Adrenal gland (tissue), 19 donors: ENCODE measurements at regions of chr20 and their contacts with region 1.

Region 1: GRCh38 chr20:35463455-35464300 is 8.3 kb downstream of the CEP250 start:
- DNase-seq: peak; percentile 58 to 85 (median 67)
- H3K4me3 ChIP-seq: no peak overlapping the region
- H3K27ac ChIP-seq: no peak overlapping the region
- H3K4me1 ChIP-seq: peaks cover 0 to 5% of the 10 kb centered on the region in 2 donors
- H3K27me3 ChIP-seq: no peaks in the 10 kb centered on the region
- CTCF ChIP-seq: peak; percentile 64 to 81 (median 77)
- POLR2A ChIP-seq: no peak

Region 2: GRCh38 chr20:35344354-35344837 is 119.3 kb before region 1 on chr20:
- intact Hi-C with region 1: no loop called
- DNase-seq: peak; percentile 34 to 80 (median 76)
- H3K4me3 ChIP-seq: no peak overlapping the region
- H3K27ac ChIP-seq: peak overlapping the region in 3 of 5 donors; percentile 0 to 72 (median 49)
- H3K4me1 ChIP-seq: peaks cover 0 to 10% of the 10 kb centered on the region in 2 donors
- H3K27me3 ChIP-seq: no peaks in the 10 kb centered on the region
- CTCF ChIP-seq: no peak
- POLR2A ChIP-seq: no peak

Region 3: GRCh38 chr20:35664544-35665221 is 201.0 kb after region 1 on chr20 and contains the starts of genes CPNE1 and RBM12:
- intact Hi-C with region 1: loop called in 1 of 2 experiments (anchors 10 kb)
- DNase-seq: peak; percentile 93 to 96 (median 94)
- H3K4me3 ChIP-seq: peak within 1 kb of the TSS; percentile 18 to 85 (median 70)
- H3K27ac ChIP-seq: peak within 1 kb of the TSS; percentile 92 to 99 (median 97)
- H3K4me1 ChIP-seq: peaks cover 12 to 36% of the 10 kb centered on the region in 2 donors
- H3K27me3 ChIP-seq: no peaks in the 10 kb centered on the region
- CTCF ChIP-seq: peak in 2 of 6 experiments; percentile 4 to 24
- POLR2A ChIP-seq: peak; percentile 87 to 90
- total RNA-seq, gene CPNE1: 66.8 to 233 (median 156) TPM
- total RNA-seq, gene RBM12: 18.9 to 98.6 (median 57.7) TPM

Region 4: GRCh38 chr20:35699127-35699975 is 235.7 kb after region 1 on chr20 and contains the starts of genes NFS1 and ROMO1:
- intact Hi-C with region 1: loop called in 1 of 2 experiments (anchors 10 kb)
- DNase-seq: peak; percentile 81 to 90 (median 85)
- H3K4me3 ChIP-seq: peak within 1 kb of the TSS; percentile 83 to 90 (median 86)
- H3K27ac ChIP-seq: peak within 1 kb of the TSS; percentile 63 to 93 (median 92)
- H3K4me1 ChIP-seq: peaks cover 10 to 47% of the 10 kb centered on the region in 2 donors
- H3K27me3 ChIP-seq: no peaks in the 10 kb centered on the region
- CTCF ChIP-seq: peak in 3 of 6 experiments; percentile 18 to 36 (median 29)
- POLR2A ChIP-seq: peak; percentile 57 to 62
- total RNA-seq, gene NFS1: 40.1 to 129 (median 114) TPM
- total RNA-seq, gene ROMO1: 154 to 477 (median 256) TPM